Natural killer cell (primary cell): ENCODE measurements at regions of chr12 and their contacts with region 1.

Region 1: GRCh38 chr12:47216150-47216677 is 136.5 kb upstream of the AMIGO2 start:
- DNase-seq: peak; percentile 62 to 88
- ATAC-seq: peak; percentile 74 to 90 (median 86)
- H3K4me3 ChIP-seq: peak overlapping the region; percentile 69
- H3K4me3 Mint-ChIP-seq: peak overlapping the region; percentile 96
- H3K27ac ChIP-seq: peak overlapping the region; percentile 87
- H3K27ac Mint-ChIP-seq: peak overlapping the region; percentile 97 to 99
- H3K4me1 ChIP-seq: peaks cover 56% of the 10 kb centered on the region
- H3K4me1 Mint-ChIP-seq: peaks cover 74 to 79% of the 10 kb centered on the region in 2 donors
- H3K27me3 ChIP-seq: no peaks in the 10 kb centered on the region
- H3K27me3 Mint-ChIP-seq: no peaks in the 10 kb centered on the region
- CTCF ChIP-seq: no peak

Region 2: GRCh38 chr12:46268590-46269558 is 947.3 kb before region 1 on chr12 and contains the start of gene SLC38A1:
- intact Hi-C with region 1: loop called (anchors 5 kb)
- DNase-seq: peak; percentile 85 to 95
- ATAC-seq: peak; percentile 61 to 81 (median 78)
- H3K4me3 ChIP-seq: peak within 1 kb of the TSS; percentile 74
- H3K4me3 Mint-ChIP-seq: no peak within 1 kb of the TSS
- H3K27ac ChIP-seq: peak within 1 kb of the TSS; percentile 94
- H3K27ac Mint-ChIP-seq: no peak within 1 kb of the TSS
- H3K4me1 ChIP-seq: peaks cover 23% of the 10 kb centered on the region
- H3K4me1 Mint-ChIP-seq: peaks cover 11 to 17% of the 10 kb centered on the region in 2 donors
- H3K27me3 ChIP-seq: no peaks in the 10 kb centered on the region
- H3K27me3 Mint-ChIP-seq: no peaks in the 10 kb centered on the region
- CTCF ChIP-seq: no peak
- total RNA-seq, gene SLC38A1: 295 to 385 (median 354) TPM

Region 3: GRCh38 chr12:46494424-46494823 is 721.8 kb before region 1 on chr12:
- intact Hi-C with region 1: no loop called
- DNase-seq: no peak
- ATAC-seq: no peak
- H3K4me3 ChIP-seq: no peak overlapping the region
- H3K4me3 Mint-ChIP-seq: no peak overlapping the region
- H3K27ac ChIP-seq: no peak overlapping the region
- H3K27ac Mint-ChIP-seq: no peak overlapping the region
- H3K4me1 ChIP-seq: no peaks in the 10 kb centered on the region
- H3K4me1 Mint-ChIP-seq: peaks cover 0 to 7% of the 10 kb centered on the region in 2 donors
- H3K27me3 ChIP-seq: no peaks in the 10 kb centered on the region
- H3K27me3 Mint-ChIP-seq: no peaks in the 10 kb centered on the region
- CTCF ChIP-seq: no peak

Region 4: GRCh38 chr12:46998811-46999368 is 217.3 kb before region 1 on chr12:
- intact Hi-C with region 1: no loop called
- DNase-seq: no peak
- ATAC-seq: no peak
- H3K4me3 ChIP-seq: no peak overlapping the region
- H3K4me3 Mint-ChIP-seq: no peak overlapping the region
- H3K27ac ChIP-seq: no peak overlapping the region
- H3K27ac Mint-ChIP-seq: no peak overlapping the region
- H3K4me1 ChIP-seq: no peaks in the 10 kb centered on the region
- H3K4me1 Mint-ChIP-seq: no peaks in the 10 kb centered on the region
- H3K27me3 ChIP-seq: no peaks in the 10 kb centered on the region
- H3K27me3 Mint-ChIP-seq: peaks cover 7 to 21% of the 10 kb centered on the region in 2 donors
- CTCF ChIP-seq: no peak

Region 5: GRCh38 chr12:47190271-47190750 is 25.9 kb before region 1 on chr12:
- intact Hi-C with region 1: loop called (anchors 2 kb)
- DNase-seq: no peak
- ATAC-seq: no peak
- H3K4me3 ChIP-seq: no peak overlapping the region
- H3K4me3 Mint-ChIP-seq: peak overlapping the region; percentile 95
- H3K27ac ChIP-seq: no peak overlapping the region
- H3K27ac Mint-ChIP-seq: peak overlapping the region; percentile 97 to 98
- H3K4me1 ChIP-seq: peaks cover 46% of the 10 kb centered on the region
- H3K4me1 Mint-ChIP-seq: peaks cover 78% of the 10 kb centered on the region in 2 donors
- H3K27me3 ChIP-seq: no peaks in the 10 kb centered on the region
- H3K27me3 Mint-ChIP-seq: no peaks in the 10 kb centered on the region
- CTCF ChIP-seq: no peak

Region 6: GRCh38 chr12:47307680-47308399 is 91.6 kb after region 1 on chr12:
- intact Hi-C with region 1: loop called (anchors 2 kb)
- DNase-seq: peak; percentile 35 to 81
- ATAC-seq: peak; percentile 92 to 95 (median 93)
- H3K4me3 ChIP-seq: peak overlapping the region; percentile 42
- H3K4me3 Mint-ChIP-seq: peak overlapping the region; percentile 92
- H3K27ac ChIP-seq: peak overlapping the region; percentile 51
- H3K27ac Mint-ChIP-seq: peak overlapping the region; percentile 86 to 93
- H3K4me1 ChIP-seq: peaks cover 12% of the 10 kb centered on the region
- H3K4me1 Mint-ChIP-seq: peaks cover 22% of the 10 kb centered on the region in 2 donors
- H3K27me3 ChIP-seq: no peaks in the 10 kb centered on the region
- H3K27me3 Mint-ChIP-seq: no peaks in the 10 kb centered on the region
- CTCF ChIP-seq: peak; percentile 68

Region 7: GRCh38 chr12:47812797-47813510 is 596.7 kb after region 1 on chr12:
- intact Hi-C with region 1: loop called (anchors 10 kb)
- DNase-seq: peak; percentile 82 to 94
- ATAC-seq: peak; percentile 60 to 81 (median 72)
- H3K4me3 ChIP-seq: peak overlapping the region; percentile 42
- H3K4me3 Mint-ChIP-seq: peak overlapping the region; percentile 88
- H3K27ac ChIP-seq: peak overlapping the region; percentile 87
- H3K27ac Mint-ChIP-seq: peak overlapping the region; percentile 91 to 92
- H3K4me1 ChIP-seq: peaks cover 98% of the 10 kb centered on the region
- H3K4me1 Mint-ChIP-seq: peaks cover 85 to 94% of the 10 kb centered on the region in 2 donors
- H3K27me3 ChIP-seq: no peaks in the 10 kb centered on the region
- H3K27me3 Mint-ChIP-seq: no peaks in the 10 kb centered on the region
- CTCF ChIP-seq: no peak